Caco-2 (cell line): ENCODE measurements at regions of chr2 and their contacts with region 1.

Region 1: GRCh38 chr2:164737612-164738081 is 104.0 kb downstream of the COBLL1 start:
- DNase-seq: peak; percentile 75 to 80
- H3K4me3 ChIP-seq: no peak overlapping the region
- H3K4me3 Mint-ChIP-seq: no peak overlapping the region
- H3K27ac Mint-ChIP-seq: no peak overlapping the region
- H3K4me1 ChIP-seq: peaks cover 25% of the 10 kb centered on the region
- H3K4me1 Mint-ChIP-seq: peaks cover 19% of the 10 kb centered on the region
- H3K27me3 ChIP-seq: no peaks in the 10 kb centered on the region
- H3K27me3 Mint-ChIP-seq: no peaks in the 10 kb centered on the region
- CTCF ChIP-seq: peak; percentile 65 to 67

Region 2: DNA sequence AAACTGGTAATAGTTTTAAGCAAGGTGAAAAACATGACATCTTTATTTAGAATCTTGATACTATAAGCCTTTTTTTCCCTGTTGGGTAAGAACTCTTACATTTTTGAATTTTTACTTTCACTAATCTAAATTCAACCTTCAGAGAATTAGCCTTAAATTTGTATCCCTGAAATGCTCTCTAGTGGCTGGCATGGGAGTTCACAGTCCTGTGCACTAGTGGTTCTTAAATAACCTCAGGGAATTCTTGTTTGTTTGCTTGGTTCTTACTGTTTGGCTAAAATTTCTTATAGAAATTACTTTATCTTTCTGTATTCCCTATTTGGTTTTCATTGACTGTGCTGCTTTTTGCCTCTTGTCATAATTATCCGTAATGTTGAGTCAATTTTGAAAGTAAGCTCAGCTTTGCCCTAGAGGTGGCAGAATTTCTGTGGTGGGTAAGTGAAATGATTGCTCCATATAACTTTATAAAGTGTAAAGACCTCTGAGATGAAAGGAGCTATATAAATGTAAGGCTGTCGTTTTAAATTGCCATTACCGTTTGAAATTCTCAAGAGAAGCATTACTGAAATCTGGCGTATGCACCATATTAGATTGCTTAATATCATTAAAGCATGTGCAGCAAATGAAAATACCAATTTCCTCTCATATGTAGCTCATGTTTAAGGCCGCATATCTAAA is 610.5 kb before region 1 on chr2:
- CTCF ChIA-PET with region 1: no interaction called
- POLR2A ChIA-PET with region 1: no interaction called
- intact Hi-C with region 1: no loop called
- DNase-seq: no peak
- H3K4me3 ChIP-seq: no peak overlapping the region
- H3K4me3 Mint-ChIP-seq: no peak overlapping the region
- H3K27ac Mint-ChIP-seq: no peak overlapping the region
- H3K4me1 ChIP-seq: no peaks in the 10 kb centered on the region
- H3K4me1 Mint-ChIP-seq: no peaks in the 10 kb centered on the region
- H3K27me3 ChIP-seq: no peaks in the 10 kb centered on the region
- H3K27me3 Mint-ChIP-seq: no peaks in the 10 kb centered on the region
- CTCF ChIP-seq: no peak

Region 3: GRCh38 chr2:164504258-164504657 is 233.4 kb before region 1 on chr2:
- CTCF ChIA-PET with region 1: no interaction called
- POLR2A ChIA-PET with region 1: no interaction called
- intact Hi-C with region 1: no loop called
- DNase-seq: peak; percentile 51
- H3K4me3 ChIP-seq: no peak overlapping the region
- H3K4me3 Mint-ChIP-seq: no peak overlapping the region
- H3K27ac Mint-ChIP-seq: no peak overlapping the region
- H3K4me1 ChIP-seq: 0 out of 2 replicates have a peak, but pooled peaks cover 1% of the 10 kb centered on the region
- H3K4me1 Mint-ChIP-seq: no peaks in the 10 kb centered on the region
- H3K27me3 ChIP-seq: no peaks in the 10 kb centered on the region
- H3K27me3 Mint-ChIP-seq: no peaks in the 10 kb centered on the region
- CTCF ChIP-seq: peak; percentile 56 to 64

Region 4: DNA sequence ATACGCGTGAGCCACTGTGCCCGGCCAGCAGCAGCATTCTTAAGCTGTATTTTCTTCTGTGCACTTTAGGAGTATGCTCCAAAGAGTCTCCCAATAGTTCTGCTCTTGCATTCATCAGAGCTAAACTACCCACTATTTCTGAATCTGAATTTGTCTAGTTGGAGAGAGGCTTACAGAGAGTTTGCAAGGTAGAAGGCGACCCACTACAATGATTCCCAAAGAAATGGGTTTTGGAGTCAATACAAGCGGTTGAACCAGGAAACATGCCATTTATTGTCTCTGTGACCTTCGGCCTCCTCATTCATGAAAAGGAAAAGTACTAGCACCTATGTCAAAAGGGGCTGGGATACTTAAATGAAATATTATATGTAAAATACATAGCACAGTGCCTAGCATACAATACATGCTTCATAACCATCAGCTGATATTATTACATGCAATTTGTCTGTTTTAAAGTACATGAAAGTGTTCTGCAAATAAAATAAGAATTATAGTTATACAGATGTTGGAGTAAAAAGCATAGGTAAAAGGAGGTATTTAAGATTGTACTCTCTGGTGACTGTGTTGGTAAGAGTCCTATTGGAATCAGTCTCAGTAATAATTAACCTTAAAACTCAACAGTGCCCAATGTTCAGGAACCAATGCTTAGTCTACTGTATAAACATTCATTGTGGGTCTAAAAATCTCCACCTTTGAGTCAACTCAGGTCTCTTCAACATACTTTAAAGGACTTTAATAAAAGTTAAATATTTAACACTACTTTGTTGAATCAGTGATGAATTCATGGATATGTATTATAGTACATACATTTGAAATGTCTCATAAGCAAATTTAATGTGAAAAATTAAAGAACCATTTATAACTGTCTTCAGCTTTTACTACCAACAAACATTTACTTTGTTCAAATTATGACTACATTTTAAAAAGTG is 26.5 kb before region 1 on chr2:
- CTCF ChIA-PET with region 1: no interaction called
- POLR2A ChIA-PET with region 1: no interaction called
- intact Hi-C with region 1: no loop called
- DNase-seq: peak; percentile 46 to 56
- H3K4me3 ChIP-seq: 0 out of 2 replicates have a peak overlapping the region, but pooled peaks have one; percentile 3
- H3K4me3 Mint-ChIP-seq: peak overlapping the region; percentile 59
- H3K27ac Mint-ChIP-seq: peak overlapping the region; percentile 40
- H3K4me1 ChIP-seq: peaks cover 66% of the 10 kb centered on the region
- H3K4me1 Mint-ChIP-seq: peaks cover 41% of the 10 kb centered on the region
- H3K27me3 ChIP-seq: no peaks in the 10 kb centered on the region
- H3K27me3 Mint-ChIP-seq: no peaks in the 10 kb centered on the region
- CTCF ChIP-seq: no peak

Region 5: GRCh38 chr2:164782323-164782722 is 44.7 kb after region 1 on chr2:
- CTCF ChIA-PET with region 1: no interaction called
- POLR2A ChIA-PET with region 1: no interaction called
- intact Hi-C with region 1: loop called (anchors 5 kb)
- DNase-seq: no peak
- H3K4me3 ChIP-seq: no peak overlapping the region
- H3K4me3 Mint-ChIP-seq: no peak overlapping the region
- H3K27ac Mint-ChIP-seq: no peak overlapping the region
- H3K4me1 ChIP-seq: peaks cover 35% of the 10 kb centered on the region
- H3K4me1 Mint-ChIP-seq: peaks cover 18% of the 10 kb centered on the region
- H3K27me3 ChIP-seq: no peaks in the 10 kb centered on the region
- H3K27me3 Mint-ChIP-seq: no peaks in the 10 kb centered on the region
- CTCF ChIP-seq: no peak

Region 6: DNA sequence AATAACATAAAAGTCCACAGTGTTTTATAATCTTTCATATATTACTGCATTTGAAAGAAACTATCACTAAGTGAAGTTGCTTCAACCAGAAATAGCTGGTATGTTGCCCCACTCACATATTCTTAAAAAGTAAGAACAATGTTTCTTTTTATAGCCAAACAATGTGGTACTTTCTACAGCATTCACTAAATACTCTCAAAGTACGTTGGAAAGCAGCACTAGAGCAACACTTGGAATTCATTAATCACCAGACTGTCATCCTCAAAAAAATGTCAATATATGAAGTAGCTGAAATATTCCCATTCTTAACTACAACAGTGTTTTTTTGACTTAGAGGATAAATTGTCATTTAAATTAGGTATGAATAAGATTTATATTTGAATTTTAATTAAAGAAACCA is 71.1 kb after region 1 on chr2:
- CTCF ChIA-PET with region 1: no interaction called
- POLR2A ChIA-PET with region 1: no interaction called
- intact Hi-C with region 1: no loop called
- DNase-seq: no peak
- H3K4me3 ChIP-seq: no peak overlapping the region
- H3K4me3 Mint-ChIP-seq: no peak overlapping the region
- H3K27ac Mint-ChIP-seq: no peak overlapping the region
- H3K4me1 ChIP-seq: peaks cover 11% of the 10 kb centered on the region; the same call in 1 of the 2 replicates
- H3K4me1 Mint-ChIP-seq: peaks cover 3% of the 10 kb centered on the region
- H3K27me3 ChIP-seq: no peaks in the 10 kb centered on the region
- H3K27me3 Mint-ChIP-seq: no peaks in the 10 kb centered on the region
- CTCF ChIP-seq: no peak

Region 7: GRCh38 chr2:164917296-164917903 is 179.8 kb after region 1 on chr2:
- CTCF ChIA-PET with region 1: interaction called, 3 read pairs
- POLR2A ChIA-PET with region 1: no interaction called
- intact Hi-C with region 1: loop called (anchors 1 kb)
- DNase-seq: peak; percentile 68 to 76
- H3K4me3 ChIP-seq: no peak overlapping the region
- H3K4me3 Mint-ChIP-seq: no peak overlapping the region
- H3K27ac Mint-ChIP-seq: no peak overlapping the region
- H3K4me1 ChIP-seq: peaks cover 40% of the 10 kb centered on the region
- H3K4me1 Mint-ChIP-seq: peaks cover 26% of the 10 kb centered on the region
- H3K27me3 ChIP-seq: no peaks in the 10 kb centered on the region
- H3K27me3 Mint-ChIP-seq: no peaks in the 10 kb centered on the region
- CTCF ChIP-seq: peak; percentile 65 to 75

Region 8: GRCh38 chr2:165203689-165204559 is 466.3 kb after region 1 on chr2 and contains the start of gene SCN3A:
- CTCF ChIA-PET with region 1: no interaction called
- POLR2A ChIA-PET with region 1: no interaction called
- intact Hi-C with region 1: loop called (anchors 5 kb)
- DNase-seq: peak; percentile 40 to 58
- H3K4me3 ChIP-seq: no peak within 1 kb of the TSS
- H3K4me3 Mint-ChIP-seq: no peak within 1 kb of the TSS
- H3K27ac Mint-ChIP-seq: no peak within 1 kb of the TSS
- H3K4me1 ChIP-seq: no peaks in the 10 kb centered on the region
- H3K4me1 Mint-ChIP-seq: no peaks in the 10 kb centered on the region
- H3K27me3 ChIP-seq: no peaks in the 10 kb centered on the region
- H3K27me3 Mint-ChIP-seq: no peaks in the 10 kb centered on the region
- CTCF ChIP-seq: peak; percentile 67 to 80
- total RNA-seq, gene SCN3A: not detected in 2 replicates